Esophagus squamous epithelium (tissue), 5 donors: ENCODE measurements at regions of chrX and their contacts with region 1.

Region 1: GRCh38 chrX:10189317-10190268 is 32.8 kb downstream of the CLCN4 start:
- DNase-seq: no peak
- H3K4me3 ChIP-seq: no peak overlapping the region
- H3K27ac ChIP-seq: no peak overlapping the region
- H3K4me1 ChIP-seq: peaks cover 0 to 11% (median 0%) of the 10 kb centered on the region in 3 donors
- H3K27me3 ChIP-seq: no peaks in the 10 kb centered on the region
- CTCF ChIP-seq: peak; percentile 65 to 84 (median 76)
- POLR2A ChIP-seq: no peak

Region 2: DNA sequence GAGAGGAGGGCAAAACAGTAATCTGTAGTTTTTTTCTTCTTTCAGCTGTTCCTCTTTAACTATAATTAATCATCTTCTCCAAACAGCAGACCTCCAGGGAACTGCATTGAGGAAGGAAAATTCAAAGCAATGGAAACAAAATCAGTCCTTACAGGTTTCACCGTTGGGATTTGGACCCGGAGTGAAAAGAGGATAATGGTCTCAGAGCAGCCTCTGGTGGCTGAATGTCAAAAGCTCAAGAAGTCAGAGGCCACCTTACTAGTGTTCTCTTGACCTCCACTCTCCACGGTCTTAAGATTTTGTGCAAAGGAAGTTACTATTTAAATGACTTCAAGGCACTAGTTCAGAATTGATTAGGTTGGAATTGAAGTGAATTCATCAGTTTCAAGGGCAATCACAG is 446.7 kb after region 1 on chrX:
- intact Hi-C with region 1: loop called (anchors 5 kb)
- DNase-seq: no peak
- H3K4me3 ChIP-seq: no peak overlapping the region
- H3K27ac ChIP-seq: no peak overlapping the region
- H3K4me1 ChIP-seq: peaks cover 0 to 25% (median 3%) of the 10 kb centered on the region in 3 donors
- H3K27me3 ChIP-seq: no peaks in the 10 kb centered on the region
- CTCF ChIP-seq: peak in 4 of 6 experiments; percentile 36 to 66 (median 47)
- POLR2A ChIP-seq: no peak

Region 3: GRCh38 chrX:10722851-10723250 is 533.3 kb after region 1 on chrX:
- intact Hi-C with region 1: loop called (anchors 5 kb)
- DNase-seq: no peak
- H3K4me3 ChIP-seq: no peak overlapping the region
- H3K27ac ChIP-seq: no peak overlapping the region
- H3K4me1 ChIP-seq: no peaks in the 10 kb centered on the region
- H3K27me3 ChIP-seq: no peaks in the 10 kb centered on the region
- CTCF ChIP-seq: peak; percentile 32 to 71 (median 65)
- POLR2A ChIP-seq: no peak

Region 4: GRCh38 chrX:11137543-11138139 is 948.0 kb after region 1 on chrX:
- intact Hi-C with region 1: loop called (anchors 5 kb)
- DNase-seq: no peak
- H3K4me3 ChIP-seq: no peak overlapping the region
- H3K27ac ChIP-seq: no peak overlapping the region
- H3K4me1 ChIP-seq: no peaks in the 10 kb centered on the region
- H3K27me3 ChIP-seq: no peaks in the 10 kb centered on the region
- CTCF ChIP-seq: peak; percentile 58 to 80 (median 62)
- POLR2A ChIP-seq: no peak